ENCODE measurements at regions of chr2 and their contacts with region 1.

Region 1: GRCh38 chr2:225002039-225002655 is 40.1 kb downstream of the DOCK10 start:
- DNase-seq: peak; percentile 70
- H3K4me3 ChIP-seq: no peak overlapping the region
- H3K27ac ChIP-seq: peak overlapping the region; percentile 25
- H3K4me1 ChIP-seq: peaks cover 4% of the 10 kb centered on the region
- H3K27me3 ChIP-seq: no peaks in the 10 kb centered on the region
- CTCF ChIP-seq: peak; percentile 72 to 80
- POLR2A ChIP-seq: no peak

Region 2: DNA sequence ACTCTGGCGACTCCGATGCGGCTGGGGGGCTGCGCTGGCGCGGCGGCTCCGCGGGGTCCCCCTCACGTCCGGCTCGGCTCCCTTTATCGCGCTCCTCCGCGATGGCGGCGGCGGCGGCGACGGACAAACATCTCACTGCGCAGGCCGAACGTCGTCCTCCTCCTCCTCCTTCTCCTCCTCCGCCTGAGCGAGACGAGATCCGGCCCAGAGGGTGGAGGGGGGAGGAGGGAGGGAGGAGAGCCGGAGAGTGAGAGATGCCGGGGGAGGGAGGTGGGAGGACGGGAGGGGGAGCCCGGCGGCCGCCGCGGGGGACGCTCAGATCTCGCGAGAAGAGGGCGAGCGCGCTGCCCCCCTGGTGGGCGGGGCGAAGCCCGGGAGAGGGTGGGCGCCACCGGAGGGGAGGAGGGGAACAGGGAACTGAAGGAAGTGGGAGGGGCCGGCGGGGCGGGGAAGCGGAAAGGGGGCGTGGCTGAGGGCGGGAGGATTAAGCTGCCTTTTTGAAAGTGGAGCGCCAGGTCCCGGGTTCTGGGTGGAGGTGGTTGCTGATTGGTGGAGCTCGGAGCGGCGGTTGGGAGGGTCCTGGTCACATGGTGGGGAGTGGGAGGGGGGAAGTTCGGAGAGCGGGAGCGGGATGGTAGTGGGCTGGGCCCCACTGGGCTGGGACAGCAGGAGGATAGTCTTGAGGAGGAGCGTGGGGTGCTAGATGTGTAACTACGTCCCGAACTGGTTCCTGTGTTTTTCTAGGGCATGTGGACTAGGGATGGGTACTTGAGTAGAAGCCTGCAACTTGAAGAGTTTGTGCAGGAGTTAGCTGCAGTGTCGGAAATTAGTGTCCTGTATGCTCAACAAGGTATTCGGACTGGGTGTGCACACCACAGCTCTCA is 416.7 kb before region 1 on chr2 and contains the start of gene CUL3:
- CTCF ChIA-PET with region 1: no interaction called
- POLR2A ChIA-PET with region 1: no interaction called
- dilution Hi-C with region 1: no loop called
- intact Hi-C with region 1: loop called (anchors 2 kb)
- DNase-seq: peak; percentile 98
- H3K4me3 ChIP-seq: peak within 1 kb of the TSS; percentile 69 to 96 (median 85)
- H3K27ac ChIP-seq: peak within 1 kb of the TSS; percentile 74
- H3K4me1 ChIP-seq: peaks cover 18% of the 10 kb centered on the region
- H3K27me3 ChIP-seq: no peaks in the 10 kb centered on the region
- CTCF ChIP-seq: no peak
- POLR2A ChIP-seq: peak; percentile 62
- total RNA-seq, gene CUL3: 82.3 and 87.1 TPM in 2 replicates

Region 3: DNA sequence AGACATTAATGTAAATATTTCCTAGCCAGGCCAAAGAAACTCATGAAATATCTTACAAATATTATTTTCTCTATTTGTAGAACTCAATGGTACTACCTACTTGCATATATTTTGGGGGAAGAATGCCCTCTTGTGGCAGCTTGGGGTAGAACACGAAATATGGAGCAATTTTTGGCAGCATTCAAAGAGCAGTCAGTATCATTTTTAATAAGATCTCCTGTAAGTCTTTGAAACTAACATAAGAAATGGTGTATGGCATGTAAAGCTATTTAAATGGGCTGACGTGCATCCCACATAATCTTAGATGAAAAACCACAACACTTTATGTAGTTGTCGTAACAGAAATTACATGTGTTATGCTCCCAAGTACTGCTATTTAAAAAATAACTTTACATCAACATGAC is 223.7 kb before region 1 on chr2:
- CTCF ChIA-PET with region 1: interaction called, 8 read pairs
- POLR2A ChIA-PET with region 1: no interaction called
- dilution Hi-C with region 1: no loop called
- intact Hi-C with region 1: loop called (anchors 1 kb)
- DNase-seq: peak; percentile 83
- H3K4me3 ChIP-seq: no peak overlapping the region
- H3K27ac ChIP-seq: no peak overlapping the region
- H3K4me1 ChIP-seq: no peaks in the 10 kb centered on the region
- H3K27me3 ChIP-seq: no peaks in the 10 kb centered on the region
- CTCF ChIP-seq: peak; percentile 55 to 61
- POLR2A ChIP-seq: no peak

Region 4: DNA sequence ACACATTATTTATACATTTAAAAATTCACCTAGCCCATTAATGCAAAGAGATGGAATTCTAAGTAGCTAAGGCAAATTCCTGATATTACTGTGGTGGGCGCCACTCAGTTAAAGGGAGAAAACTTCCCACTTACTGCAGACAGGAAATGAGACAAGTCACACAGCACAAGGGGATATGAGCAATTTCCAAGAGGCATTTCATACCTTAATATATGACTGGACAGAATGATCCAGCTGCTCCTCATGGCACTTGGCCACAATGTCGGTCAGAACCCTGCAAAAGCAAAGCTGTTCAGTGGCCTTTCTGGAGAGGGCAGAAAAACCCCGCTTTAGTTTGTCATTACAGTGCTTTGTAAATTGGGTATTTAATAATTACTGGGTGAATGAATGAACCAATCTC is 164.6 kb before region 1 on chr2:
- CTCF ChIA-PET with region 1: interaction called, 28 read pairs
- POLR2A ChIA-PET with region 1: no interaction called
- dilution Hi-C with region 1: no loop called
- intact Hi-C with region 1: loop called (anchors 1 kb)
- DNase-seq: peak; percentile 95
- H3K4me3 ChIP-seq: peak overlapping the region in 1 of 3 experiments; percentile 49
- H3K27ac ChIP-seq: peak overlapping the region; percentile 100
- H3K4me1 ChIP-seq: peaks cover 29% of the 10 kb centered on the region
- H3K27me3 ChIP-seq: no peaks in the 10 kb centered on the region
- CTCF ChIP-seq: peak; percentile 1 to 10
- POLR2A ChIP-seq: peak; percentile 65

Region 5: DNA sequence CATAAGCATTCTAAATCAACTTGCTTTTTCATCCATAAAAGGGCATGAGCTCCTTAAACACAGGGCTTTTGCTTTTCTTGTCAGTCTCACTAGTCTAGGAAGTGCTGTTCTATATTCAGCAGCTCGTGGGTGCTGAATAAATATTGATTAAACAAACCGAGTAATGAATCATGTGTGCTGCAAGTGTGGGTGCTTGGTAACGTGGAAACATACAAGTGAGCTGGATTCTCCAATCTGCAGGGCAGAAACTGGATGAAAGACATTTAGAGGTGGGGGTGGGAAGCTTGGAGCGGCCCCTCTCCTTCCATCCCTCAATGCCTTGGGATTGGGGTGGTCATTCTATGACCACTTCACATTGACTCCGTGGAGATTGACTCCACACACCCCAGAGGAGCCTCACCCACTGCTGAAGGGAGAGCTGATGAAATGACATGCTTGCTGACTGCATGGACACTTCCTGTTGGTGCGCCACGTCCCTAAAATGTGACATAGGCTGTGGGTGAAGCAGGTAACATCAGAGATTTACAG is 74.4 kb before region 1 on chr2:
- CTCF ChIA-PET with region 1: interaction called, 8 read pairs
- POLR2A ChIA-PET with region 1: no interaction called
- dilution Hi-C with region 1: no loop called
- intact Hi-C with region 1: loop called (anchors 1 kb)
- DNase-seq: peak; percentile 77
- H3K4me3 ChIP-seq: no peak overlapping the region
- H3K27ac ChIP-seq: peak overlapping the region; percentile 87
- H3K4me1 ChIP-seq: peaks cover 34% of the 10 kb centered on the region
- H3K27me3 ChIP-seq: no peaks in the 10 kb centered on the region
- CTCF ChIP-seq: no peak
- POLR2A ChIP-seq: no peak

Region 6: DNA sequence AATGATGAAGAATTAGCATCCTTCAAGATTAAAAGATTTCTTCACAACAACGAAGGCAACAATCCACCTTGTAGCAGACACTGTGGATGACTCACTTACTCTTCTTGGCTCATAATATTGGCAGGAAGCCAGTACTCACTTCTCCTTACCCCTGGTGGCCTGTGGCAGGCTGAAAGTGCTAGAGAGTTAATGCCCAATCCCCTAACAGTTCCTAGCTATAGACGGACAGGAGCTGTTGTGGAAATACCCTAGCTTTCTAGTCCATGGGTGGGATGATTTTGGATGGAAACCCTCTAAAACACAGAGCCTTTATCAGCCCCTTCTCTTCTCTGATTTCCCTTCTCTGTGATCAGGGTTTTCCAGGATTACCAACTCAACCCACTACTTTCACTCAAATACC is 268.7 kb after region 1 on chr2:
- CTCF ChIA-PET with region 1: no interaction called
- POLR2A ChIA-PET with region 1: no interaction called
- dilution Hi-C with region 1: no loop called
- intact Hi-C with region 1: no loop called
- DNase-seq: no peak
- H3K4me3 ChIP-seq: no peak overlapping the region
- H3K27ac ChIP-seq: no peak overlapping the region
- H3K4me1 ChIP-seq: no peaks in the 10 kb centered on the region
- H3K27me3 ChIP-seq: no peaks in the 10 kb centered on the region
- CTCF ChIP-seq: no peak
- POLR2A ChIP-seq: no peak